Sciatic nerve (tissue), 2 donors: ENCODE measurements at regions of chr5 and their contacts with region 1.

Region 1: GRCh38 chr5:172059661-172060100 is 53.2 kb upstream of the FBXW11 start:
- DNase-seq: no peak
- ATAC-seq: peak; percentile 25

Region 2: DNA sequence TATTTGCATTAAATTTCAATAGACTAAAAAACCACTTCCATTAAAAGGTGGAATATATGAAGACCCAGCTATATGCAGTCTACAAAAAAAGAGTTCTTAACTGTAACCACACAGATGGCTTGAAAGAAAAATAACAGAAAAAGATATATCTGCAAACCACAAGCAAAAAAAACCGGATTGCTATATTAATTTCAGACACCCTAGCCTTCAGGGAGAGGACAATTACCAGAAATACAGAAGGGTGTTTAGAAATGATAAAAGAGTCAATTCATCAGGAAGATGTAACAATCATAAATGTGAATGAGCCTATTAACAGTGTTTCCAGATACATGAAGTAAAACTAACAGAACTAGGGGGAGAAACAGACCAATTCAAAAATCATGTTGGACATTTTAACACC is 331.0 kb before region 1 on chr5:
- intact Hi-C with region 1: no loop called
- DNase-seq: no peak
- ATAC-seq: no peak

Region 3: DNA sequence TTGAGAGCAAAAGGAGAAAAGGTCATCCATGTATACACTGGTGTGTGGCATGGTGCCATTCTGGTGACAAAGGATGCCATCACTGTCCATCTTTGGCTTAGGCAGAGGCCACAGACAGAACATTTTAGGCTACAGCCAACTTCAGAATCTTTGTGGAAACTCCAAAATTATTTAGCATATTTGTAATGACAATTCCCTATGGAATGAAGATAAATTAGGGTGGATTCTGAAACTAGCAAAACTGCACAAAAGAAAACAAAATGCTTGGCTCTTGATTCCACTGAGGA is 145.8 kb before region 1 on chr5:
- intact Hi-C with region 1: loop called (anchors 10 kb)
- DNase-seq: no peak
- ATAC-seq: no peak

Region 4: DNA sequence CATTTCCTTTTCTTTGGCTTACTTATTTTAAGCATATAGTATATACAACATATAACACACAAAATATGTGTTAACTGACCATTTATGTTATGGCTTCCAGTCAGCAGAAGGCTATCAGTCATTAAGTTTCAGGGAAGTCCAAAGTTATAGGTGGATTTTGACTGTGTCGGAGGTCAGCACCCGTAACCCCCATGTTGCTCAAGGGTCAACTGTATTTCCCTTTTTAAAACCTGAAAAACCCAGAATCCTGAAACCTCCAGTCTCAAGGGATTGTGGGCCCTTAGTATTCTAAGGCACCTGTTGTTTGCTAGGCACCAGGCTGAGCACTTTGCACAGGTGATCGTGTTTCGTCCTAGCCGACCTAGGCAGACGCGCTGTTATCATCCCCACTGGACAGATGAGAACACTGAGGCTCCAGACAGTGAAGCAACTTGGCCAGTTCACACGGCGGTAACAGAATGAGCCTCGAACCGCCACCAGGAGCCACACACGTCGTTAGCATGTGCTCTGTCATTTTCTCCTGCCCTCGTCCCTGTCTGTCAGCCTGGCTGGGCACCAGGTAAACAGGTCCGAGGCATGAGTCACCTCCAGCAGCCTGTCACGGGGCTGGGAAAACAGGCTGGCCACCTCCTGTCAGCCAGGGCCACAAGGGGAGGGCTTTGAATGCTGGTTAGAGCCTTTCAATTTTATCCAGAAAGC is 671.4 kb after region 1 on chr5:
- intact Hi-C with region 1: no loop called
- DNase-seq: peak; percentile 54
- ATAC-seq: no peak